ENCODE measurements at regions of chr18 and their contacts with region 1.

Region 1: GRCh38 chr18:26656944-26657536 is 108.7 kb upstream of the KCTD1 start:
- DNase-seq: peak; percentile 39 to 82 (median 68)
- H3K4me3 ChIP-seq: peak overlapping the region; percentile 46 to 84 (median 73)
- H3K27ac ChIP-seq: peak overlapping the region; percentile 60 to 99 (median 96)
- H3K27me3 ChIP-seq: no peaks in the 10 kb centered on the region
- CTCF ChIP-seq: peak in 33 of 56 donors; percentile 10 to 55 (median 29)

Region 2: GRCh38 chr18:26458526-26459232 is 198.4 kb before region 1 on chr18:
- intact Hi-C with region 1: loop called in 1 of 2 experiments (anchors 5 kb)
- DNase-seq: peak in 1 of 10 donors; percentile 21
- H3K4me3 ChIP-seq: no peak overlapping the region
- H3K27ac ChIP-seq: peak overlapping the region in 55 of 59 donors; percentile 8 to 87 (median 67)
- H3K27me3 ChIP-seq: no peaks in the 10 kb centered on the region
- CTCF ChIP-seq: no peak

Region 3: GRCh38 chr18:26568926-26569665 is 87.9 kb before region 1 on chr18:
- intact Hi-C with region 1: no loop called
- DNase-seq: peak in 2 of 10 donors; percentile 53 to 54
- H3K4me3 ChIP-seq: no peak overlapping the region
- H3K27ac ChIP-seq: peak overlapping the region in 19 of 59 donors; percentile 20 to 76 (median 52)
- H3K27me3 ChIP-seq: no peaks in the 10 kb centered on the region
- CTCF ChIP-seq: no peak

Region 4: GRCh38 chr18:26863122-26863879 is 206.3 kb after region 1 on chr18:
- intact Hi-C with region 1: loop called in 1 of 2 experiments (anchors 10 kb)
- DNase-seq: peak; percentile 37 to 87 (median 76)
- H3K4me3 ChIP-seq: peak overlapping the region; percentile 11 to 67 (median 53)
- H3K27ac ChIP-seq: peak overlapping the region in 58 of 59 donors; percentile 61 to 96 (median 88)
- H3K27me3 ChIP-seq: peaks cover 0 to 34% (median 0%) of the 10 kb centered on the region in 45 donors
- CTCF ChIP-seq: no peak

Measured in dorsolateral prefrontal cortex (tissue), 120 donors.